ENCODE measurements at regions of chr3 and their contacts with region 1.

Region 1: DNA sequence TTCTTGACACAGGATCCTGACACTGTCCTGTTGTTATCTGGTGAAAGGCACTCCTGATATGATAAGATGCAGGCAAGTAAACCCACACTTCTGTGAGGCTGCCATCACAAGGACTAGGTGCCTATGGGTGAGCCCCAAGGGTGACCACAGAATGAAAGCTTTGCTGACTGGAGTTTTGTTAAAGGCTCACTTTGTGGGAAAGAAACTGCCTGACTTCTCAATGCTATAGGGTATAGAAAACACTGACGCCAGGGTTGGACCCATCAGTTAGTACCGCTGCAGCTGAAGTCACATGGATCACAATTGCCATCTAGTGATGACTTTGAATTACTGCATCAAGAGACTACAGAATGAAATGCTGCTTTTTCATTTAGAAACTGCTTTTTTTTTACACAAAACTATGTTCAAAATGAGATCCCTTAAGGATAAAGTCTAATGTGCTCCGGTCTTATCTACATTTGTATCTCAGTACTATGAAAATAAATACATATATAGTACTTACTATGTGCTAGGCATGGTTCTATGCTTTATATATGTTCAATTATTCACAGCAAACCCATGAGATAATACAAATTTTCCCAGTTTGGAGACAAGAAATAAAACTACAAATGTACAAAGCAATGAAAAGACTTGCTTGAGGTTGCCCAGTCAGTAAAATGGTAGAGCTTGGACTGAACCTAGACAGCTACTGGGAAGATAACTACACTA is 64.2 kb upstream of the CMSS1 start:
- DNase-seq: peak; percentile 53
- H3K27ac ChIP-seq: no peak overlapping the region
- CTCF ChIP-seq: peak; percentile 77

Region 2: DNA sequence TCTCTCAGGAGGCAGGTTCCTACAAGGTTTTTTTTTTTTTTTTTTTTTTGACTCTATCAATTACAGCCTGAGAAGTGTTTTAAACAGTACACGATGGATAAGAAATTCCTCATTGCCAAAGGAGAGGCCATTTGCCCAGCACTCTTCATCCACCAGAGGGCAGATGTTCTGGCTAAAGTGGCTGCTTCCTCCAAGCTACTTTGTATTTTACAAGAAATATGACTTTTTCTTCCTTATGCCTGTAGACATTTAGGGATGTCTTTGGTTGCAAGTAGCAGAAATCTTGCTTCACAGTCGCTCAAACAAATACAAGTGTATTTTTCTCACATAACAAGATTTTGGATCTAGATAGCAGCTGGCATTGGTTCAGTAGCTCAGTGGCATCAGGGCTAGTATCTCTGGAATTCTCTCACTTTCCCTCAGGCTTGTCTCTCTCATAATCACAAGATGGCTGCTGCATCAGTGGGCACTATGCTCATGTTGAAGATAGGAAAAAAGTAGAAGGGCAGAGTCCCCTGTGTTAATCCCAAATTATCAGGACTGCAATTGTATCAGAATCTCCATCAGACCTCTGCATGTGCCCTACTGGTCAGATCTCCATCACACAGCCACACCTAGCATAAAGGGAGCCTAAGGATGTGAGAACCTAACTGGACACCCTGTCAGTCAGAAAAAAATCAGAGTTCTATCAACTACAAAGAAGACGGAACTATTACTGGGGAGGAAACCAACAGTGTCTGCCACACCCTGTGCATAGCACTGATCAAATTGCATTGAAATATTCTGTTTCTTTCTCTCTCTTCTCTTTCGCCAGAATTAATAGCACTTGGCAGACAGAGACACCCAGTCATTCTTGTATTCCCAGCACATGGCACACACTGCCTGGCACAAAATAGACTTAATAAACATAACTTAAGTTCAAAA is 253.9 kb before region 1 on chr3:
- CTCF ChIA-PET with region 1: interaction called, 16 read pairs
- POLR2A ChIA-PET with region 1: no interaction called
- DNase-seq: peak; percentile 42
- H3K27ac ChIP-seq: no peak overlapping the region
- CTCF ChIP-seq: peak; percentile 61

Region 3: DNA sequence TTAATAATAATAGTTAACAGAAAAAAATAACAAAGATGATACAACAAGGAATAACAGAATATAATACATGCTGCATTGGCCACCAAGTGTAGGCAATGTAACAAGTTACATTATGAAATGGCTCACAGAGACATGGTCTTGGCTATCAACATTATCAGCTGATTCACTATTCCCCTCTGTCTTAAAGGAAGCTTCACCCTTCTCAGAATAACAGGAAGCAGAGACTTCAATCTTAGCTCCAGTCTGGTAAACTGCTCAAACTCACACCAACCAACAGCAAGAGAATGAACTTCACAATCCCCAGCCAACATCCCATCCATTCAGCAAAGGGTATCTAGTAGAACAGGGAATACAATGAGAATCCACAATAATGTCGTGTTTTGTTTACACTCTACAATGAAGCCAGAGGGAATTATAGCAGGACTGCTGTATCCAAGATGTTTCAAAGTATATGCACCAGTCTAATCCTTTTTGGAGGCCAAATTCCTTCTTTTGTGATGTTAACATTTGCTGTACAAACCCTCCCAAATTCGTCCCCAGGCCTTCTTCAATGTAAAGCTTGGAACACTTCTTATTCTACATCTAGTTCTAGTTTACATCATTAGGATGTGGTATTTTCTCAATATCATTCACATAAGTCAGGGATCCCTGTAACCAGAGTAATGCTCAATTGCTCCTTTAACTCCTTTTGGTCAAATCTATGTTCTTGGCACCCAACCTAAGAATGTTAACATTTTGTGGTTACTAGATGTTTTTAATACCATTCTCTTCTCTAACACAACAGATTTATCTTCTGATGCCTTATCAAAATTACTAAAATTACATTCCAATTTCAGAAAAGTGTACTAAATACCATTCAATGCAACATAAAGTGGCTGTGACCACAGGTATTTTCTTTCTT is 11.9 kb after region 1 on chr3:
- CTCF ChIA-PET with region 1: interaction called, 10 read pairs
- POLR2A ChIA-PET with region 1: no interaction called
- DNase-seq: no peak
- H3K27ac ChIP-seq: no peak overlapping the region
- CTCF ChIP-seq: no peak

Region 4: DNA sequence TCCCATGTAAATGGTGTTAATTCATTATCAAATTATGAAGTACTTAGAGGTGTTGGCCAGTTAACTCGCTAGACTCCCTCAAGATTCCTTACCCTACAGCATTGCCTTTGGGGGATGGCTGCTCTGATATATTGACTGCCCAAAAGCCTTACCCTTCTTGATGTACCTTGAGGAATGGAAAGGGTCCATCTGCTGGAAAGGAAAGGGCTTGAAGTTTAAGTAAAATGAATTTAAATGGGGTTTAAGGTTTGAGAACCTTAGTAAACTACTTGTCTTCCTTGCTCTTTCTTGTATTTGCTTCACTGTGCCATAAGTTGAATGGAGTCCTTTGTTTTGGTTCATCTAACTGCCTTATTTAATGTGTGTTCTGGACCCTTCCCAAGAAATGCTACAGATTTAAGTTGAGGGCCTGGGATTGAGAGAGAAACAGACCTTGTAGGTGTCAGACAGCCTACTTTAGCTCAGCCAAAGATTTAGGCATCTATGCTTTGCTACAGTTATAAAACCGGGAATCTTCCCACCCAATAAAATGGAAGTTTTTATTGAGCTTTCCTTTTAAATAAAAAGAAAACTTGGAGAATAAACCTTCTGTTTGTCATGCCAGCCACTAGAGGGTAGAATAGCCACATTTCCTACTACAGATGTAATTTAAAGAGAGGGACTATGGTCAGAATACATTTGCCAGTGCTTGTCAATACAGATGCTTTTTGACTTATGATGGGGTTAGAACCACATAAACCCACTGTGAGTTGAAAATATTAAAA is 89.6 kb after region 1 on chr3:
- CTCF ChIA-PET with region 1: no interaction called
- POLR2A ChIA-PET with region 1: no interaction called
- DNase-seq: peak; percentile 48
- H3K27ac ChIP-seq: no peak overlapping the region
- CTCF ChIP-seq: peak; percentile 72